ENCODE measurements at regions of chr10 and their contacts with region 1.

Region 1: DNA sequence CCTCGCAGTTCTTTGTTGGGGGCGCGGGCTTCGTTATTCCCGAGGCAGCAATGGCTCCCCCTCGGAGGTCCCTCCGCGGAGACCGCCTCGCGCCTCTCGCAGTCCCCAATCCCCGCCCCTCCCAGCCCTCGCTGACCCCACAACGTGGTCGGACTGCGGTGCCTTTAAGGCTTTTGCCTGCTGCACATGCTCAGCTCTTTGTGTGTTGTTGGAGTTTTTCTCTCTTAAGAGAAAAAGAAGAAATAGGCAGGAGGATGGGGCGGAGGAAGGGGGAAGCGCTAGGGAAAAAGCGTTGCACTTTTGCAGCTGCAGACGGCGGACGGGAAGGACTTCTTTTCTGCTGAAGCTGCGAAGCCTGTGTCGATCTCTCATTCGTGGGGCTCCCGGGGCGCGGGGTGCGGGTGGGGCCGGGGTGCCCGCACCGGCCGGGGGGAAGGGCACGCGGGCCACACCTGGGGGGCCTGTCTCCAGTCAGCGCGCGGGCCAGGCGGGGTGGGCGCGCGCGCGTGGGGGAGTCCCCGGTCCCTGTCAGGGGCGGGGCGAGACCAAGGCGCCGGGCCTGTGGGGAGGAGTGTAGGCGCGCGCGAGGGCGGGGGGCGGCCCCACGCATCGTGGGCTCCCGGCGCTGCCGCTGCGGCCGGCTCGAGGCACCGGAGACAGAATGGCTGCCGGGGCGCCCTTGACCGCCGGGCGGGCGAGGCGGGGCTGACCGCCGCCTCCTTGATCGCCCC is 445 bp upstream of the ATRNL1 start:
- DNase-seq: peak; percentile 27
- ATAC-seq: peak; percentile 77
- H3K4me3 ChIP-seq: peak overlapping the region; percentile 64
- H3K27ac ChIP-seq: no peak overlapping the region
- H3K4me1 ChIP-seq: no peaks in the 10 kb centered on the region
- H3K27me3 ChIP-seq: peaks cover 39% of the 10 kb centered on the region
- CTCF ChIP-seq: no peak
- POLR2A ChIP-seq: no peak
- RAD21 ChIP-seq: no peak

Region 2: DNA sequence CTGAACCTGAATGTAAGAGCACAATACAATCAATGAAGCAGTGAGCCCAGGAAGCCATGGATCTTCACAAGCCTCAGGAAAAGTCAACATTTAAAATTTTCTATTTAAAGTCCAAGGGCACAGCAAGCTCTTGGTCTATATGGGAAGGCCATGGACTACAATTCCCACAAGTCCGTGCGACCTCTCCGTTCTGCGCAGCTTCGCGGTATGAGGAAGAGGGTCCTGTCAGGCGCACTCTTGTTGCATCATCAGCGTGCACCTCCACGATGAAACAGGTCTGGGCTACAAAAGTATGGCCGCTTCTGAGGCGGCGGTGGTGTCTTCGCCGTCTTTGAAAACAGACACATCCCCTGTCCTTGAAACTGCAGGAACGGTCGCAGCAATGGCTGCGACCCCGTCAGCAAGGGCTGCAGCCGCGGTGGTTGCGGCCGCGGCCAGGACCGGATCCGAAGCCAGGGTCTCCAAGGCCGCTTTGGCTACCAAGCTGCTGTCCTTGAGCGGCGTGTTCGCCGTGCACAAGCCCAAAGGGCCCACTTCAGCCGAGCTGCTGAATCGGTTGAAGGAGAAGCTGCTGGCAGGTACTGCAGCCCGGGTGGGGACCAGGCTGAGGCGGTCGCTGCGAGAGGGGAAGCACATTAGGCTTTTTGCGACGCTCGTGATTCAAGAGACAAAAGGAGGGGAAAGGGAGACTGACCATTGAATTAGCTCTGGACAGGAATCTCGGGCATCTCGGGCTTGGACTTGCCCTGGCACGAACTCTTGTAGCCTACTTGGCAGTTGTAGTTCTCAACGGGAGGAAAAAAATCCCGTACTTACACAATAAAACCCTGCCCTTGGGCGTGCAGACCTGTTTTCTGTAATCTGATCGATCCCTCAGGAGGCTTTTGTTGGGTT is 154.5 kb before region 1 on chr10 and contains the start of gene TRUB1:
- CTCF ChIA-PET with region 1: no interaction called
- POLR2A ChIA-PET with region 1: no interaction called
- dilution Hi-C with region 1: no loop called
- in situ Hi-C with region 1: no loop called
- intact Hi-C with region 1: loop called (anchors 5 kb)
- DNase-seq: peak; percentile 98
- ATAC-seq: peak; percentile 99
- H3K4me3 ChIP-seq: peak within 1 kb of the TSS; percentile 72
- H3K27ac ChIP-seq: peak within 1 kb of the TSS; percentile 85
- H3K4me1 ChIP-seq: peaks cover 3% of the 10 kb centered on the region
- H3K27me3 ChIP-seq: no peaks in the 10 kb centered on the region
- CTCF ChIP-seq: no peak
- POLR2A ChIP-seq: peak; percentile 48; the same call in 1 of the 2 replicates
- RAD21 ChIP-seq: no peak
- total RNA-seq, gene TRUB1: 17.9 and 26.1 TPM in 2 replicates

Region 3: DNA sequence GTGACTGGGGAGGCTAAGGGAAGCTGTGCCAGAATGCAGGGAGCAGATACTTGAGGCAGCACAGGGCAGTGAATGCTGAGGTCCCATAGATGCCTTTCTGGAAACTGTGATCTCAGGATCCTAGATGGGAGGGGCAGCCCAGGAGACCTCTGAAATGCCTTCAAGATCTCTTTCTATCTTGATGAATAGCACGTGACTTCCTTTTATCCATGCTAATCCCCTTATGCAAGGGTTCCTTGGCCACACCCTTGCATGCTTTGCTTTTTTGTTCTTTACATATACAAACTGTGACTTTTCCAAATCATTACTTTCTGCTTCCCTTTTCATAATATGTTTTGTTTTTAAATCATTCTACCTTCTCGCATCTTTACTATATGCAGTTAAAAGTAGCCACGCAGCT is 15.1 kb after region 1 on chr10:
- CTCF ChIA-PET with region 1: no interaction called
- POLR2A ChIA-PET with region 1: interaction called, 14 read pairs
- dilution Hi-C with region 1: no loop called
- in situ Hi-C with region 1: no loop called
- intact Hi-C with region 1: no loop called
- DNase-seq: no peak
- ATAC-seq: no peak
- H3K4me3 ChIP-seq: no peak overlapping the region
- H3K27ac ChIP-seq: no peak overlapping the region
- H3K4me1 ChIP-seq: no peaks in the 10 kb centered on the region
- H3K27me3 ChIP-seq: no peaks in the 10 kb centered on the region
- CTCF ChIP-seq: no peak
- POLR2A ChIP-seq: no peak
- RAD21 ChIP-seq: no peak

Region 4: DNA sequence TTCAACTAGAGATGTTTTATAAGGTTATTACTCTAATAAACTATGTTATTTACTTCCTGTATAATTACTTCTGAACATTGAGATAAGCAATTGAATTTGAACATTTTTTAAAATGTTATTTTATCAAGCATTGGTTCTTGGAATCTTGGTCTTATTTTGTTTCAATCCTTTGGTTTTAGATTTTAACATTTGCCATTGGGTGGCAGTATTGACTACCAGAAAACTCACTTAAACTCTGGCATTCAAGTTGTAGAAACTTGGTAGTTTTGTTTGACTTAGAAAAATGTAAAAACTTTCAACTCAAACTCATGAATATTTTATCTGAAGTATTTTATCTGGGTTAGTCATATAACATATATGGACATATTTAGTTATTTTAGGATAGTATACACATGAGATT is 48.5 kb after region 1 on chr10:
- CTCF ChIA-PET with region 1: no interaction called
- POLR2A ChIA-PET with region 1: no interaction called
- dilution Hi-C with region 1: no loop called
- in situ Hi-C with region 1: no loop called
- intact Hi-C with region 1: no loop called
- DNase-seq: peak; percentile 12
- ATAC-seq: no peak
- H3K4me3 ChIP-seq: no peak overlapping the region
- H3K27ac ChIP-seq: no peak overlapping the region
- H3K4me1 ChIP-seq: no peaks in the 10 kb centered on the region
- H3K27me3 ChIP-seq: no peaks in the 10 kb centered on the region
- CTCF ChIP-seq: peak; percentile 46
- POLR2A ChIP-seq: no peak
- RAD21 ChIP-seq: peak; percentile 36

Measured in IMR-90 (cell line).